ENCODE measurements at regions of chr1 and their contacts with region 1.

Region 1: GRCh38 chr1:93734999-93735398 is 53.4 kb upstream of the BCAR3 start:
- DNase-seq: no peak
- H3K4me3 ChIP-seq: no peak overlapping the region
- H3K27ac ChIP-seq: no peak overlapping the region
- H3K4me1 ChIP-seq: peaks cover 0 to 6% (median 1%) of the 10 kb centered on the region in 4 experiments; a peak in 2 of 7 replicates
- H3K27me3 ChIP-seq: peaks cover 0 to 2% (median 0%) of the 10 kb centered on the region in 4 experiments; a peak in 1 of 7 replicates
- CTCF ChIP-seq: peak; percentile 30 to 52 (median 51); a peak in 3 of 4 replicates
- EP300 ChIP-seq: no peak
- POLR2A ChIP-seq: no peak
- RAD21 ChIP-seq: peak; percentile 28 to 44

Region 2: GRCh38 chr1:93483200-93483599 is 251.8 kb before region 1 on chr1:
- CTCF ChIA-PET with region 1: no interaction called
- POLR2A ChIA-PET with region 1: no interaction called
- DNase-seq: no peak
- H3K4me3 ChIP-seq: no peak overlapping the region
- H3K27ac ChIP-seq: no peak overlapping the region
- H3K4me1 ChIP-seq: peaks cover 0 to under 1% (median 0%) of the 10 kb centered on the region in 4 experiments; a peak in 2 of 7 replicates
- H3K27me3 ChIP-seq: no peaks in the 10 kb centered on the region
- CTCF ChIP-seq: no peak
- EP300 ChIP-seq: no peak
- POLR2A ChIP-seq: no peak
- RAD21 ChIP-seq: no peak

Region 3: DNA sequence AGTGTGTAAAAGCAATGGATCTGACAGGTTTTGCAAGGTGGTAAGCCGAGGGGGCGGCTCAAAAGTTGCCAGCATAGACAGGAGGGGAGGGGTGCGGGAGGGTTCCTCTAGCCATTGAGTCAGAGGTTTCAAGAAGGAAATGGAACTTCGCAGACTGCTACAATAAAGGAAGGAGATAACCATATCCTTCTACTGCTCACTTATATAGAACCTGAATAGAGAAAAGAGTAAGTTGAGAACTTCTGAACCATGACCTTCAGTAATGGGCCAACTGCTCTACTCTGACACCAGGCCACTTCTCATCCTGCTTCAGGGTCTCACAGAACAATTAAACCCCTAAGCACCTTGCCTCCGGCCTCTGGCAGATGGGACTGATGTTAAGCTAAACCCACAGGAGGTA is 27.0 kb before region 1 on chr1:
- CTCF ChIA-PET with region 1: interaction called, 11 read pairs
- POLR2A ChIA-PET with region 1: no interaction called
- DNase-seq: no peak
- H3K4me3 ChIP-seq: no peak overlapping the region
- H3K27ac ChIP-seq: no peak overlapping the region
- H3K4me1 ChIP-seq: peaks cover 0 to 4% (median 2%) of the 10 kb centered on the region in 4 experiments; a peak in 2 of 7 replicates
- H3K27me3 ChIP-seq: peaks cover 0 to 1% (median 0%) of the 10 kb centered on the region in 4 experiments; a peak in 1 of 7 replicates
- CTCF ChIP-seq: no peak
- EP300 ChIP-seq: no peak
- POLR2A ChIP-seq: no peak
- RAD21 ChIP-seq: no peak

Region 4: GRCh38 chr1:93722081-93723031 is 12.6 kb before region 1 on chr1:
- CTCF ChIA-PET with region 1: interaction called, 34 read pairs
- POLR2A ChIA-PET with region 1: no interaction called
- DNase-seq: no peak
- H3K4me3 ChIP-seq: no peak overlapping the region
- H3K27ac ChIP-seq: no peak overlapping the region
- H3K4me1 ChIP-seq: peaks cover 0 to 12% (median 4%) of the 10 kb centered on the region in 4 experiments; a peak in 6 of 7 replicates
- H3K27me3 ChIP-seq: no peaks in the 10 kb centered on the region; a peak in 1 of 7 replicates
- CTCF ChIP-seq: no peak
- EP300 ChIP-seq: no peak
- POLR2A ChIP-seq: no peak
- RAD21 ChIP-seq: no peak; a peak in 1 of 4 replicates

Region 5: DNA sequence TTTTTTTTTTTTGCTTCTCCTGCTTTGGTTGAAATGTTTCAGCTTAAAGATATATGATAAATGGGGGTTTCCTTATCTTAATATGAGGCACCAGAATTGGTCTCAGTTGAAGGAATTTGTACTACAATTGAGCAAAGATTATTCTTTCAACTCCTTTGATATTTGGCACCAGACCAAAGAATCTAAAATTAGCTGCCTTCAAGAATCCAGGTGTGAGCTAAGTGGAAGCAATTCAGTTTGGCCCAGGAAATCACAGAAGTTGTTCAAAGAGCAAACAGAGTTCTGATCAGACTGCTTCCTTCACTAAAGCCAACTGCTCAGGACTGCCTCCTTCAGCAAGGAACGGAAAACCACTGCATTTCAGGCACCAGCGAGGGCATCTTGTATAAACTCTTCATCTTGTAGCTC is 14.9 kb after region 1 on chr1:
- CTCF ChIA-PET with region 1: interaction called, 37 read pairs
- POLR2A ChIA-PET with region 1: no interaction called
- DNase-seq: peak in 1 of 2 experiments; percentile 25
- H3K4me3 ChIP-seq: no peak overlapping the region
- H3K27ac ChIP-seq: no peak overlapping the region
- H3K4me1 ChIP-seq: no peaks in the 10 kb centered on the region
- H3K27me3 ChIP-seq: no peaks in the 10 kb centered on the region; a peak in 1 of 7 replicates
- CTCF ChIP-seq: peak; percentile 41 to 73 (median 56)
- EP300 ChIP-seq: no peak
- POLR2A ChIP-seq: no peak
- RAD21 ChIP-seq: peak; percentile 43 to 66; a peak in 3 of 4 replicates

Region 6: GRCh38 chr1:93784538-93784937 is 49.5 kb after region 1 on chr1:
- CTCF ChIA-PET with region 1: no interaction called
- POLR2A ChIA-PET with region 1: no interaction called
- DNase-seq: no peak
- H3K4me3 ChIP-seq: no peak overlapping the region
- H3K27ac ChIP-seq: no peak overlapping the region
- H3K4me1 ChIP-seq: peaks cover 0 to 4% (median 1%) of the 10 kb centered on the region in 4 experiments; a peak in 1 of 7 replicates
- H3K27me3 ChIP-seq: no peaks in the 10 kb centered on the region
- CTCF ChIP-seq: no peak
- EP300 ChIP-seq: no peak
- POLR2A ChIP-seq: no peak
- RAD21 ChIP-seq: no peak